ENCODE measurements at regions of chr3 and their contacts with region 1.

Region 1: DNA sequence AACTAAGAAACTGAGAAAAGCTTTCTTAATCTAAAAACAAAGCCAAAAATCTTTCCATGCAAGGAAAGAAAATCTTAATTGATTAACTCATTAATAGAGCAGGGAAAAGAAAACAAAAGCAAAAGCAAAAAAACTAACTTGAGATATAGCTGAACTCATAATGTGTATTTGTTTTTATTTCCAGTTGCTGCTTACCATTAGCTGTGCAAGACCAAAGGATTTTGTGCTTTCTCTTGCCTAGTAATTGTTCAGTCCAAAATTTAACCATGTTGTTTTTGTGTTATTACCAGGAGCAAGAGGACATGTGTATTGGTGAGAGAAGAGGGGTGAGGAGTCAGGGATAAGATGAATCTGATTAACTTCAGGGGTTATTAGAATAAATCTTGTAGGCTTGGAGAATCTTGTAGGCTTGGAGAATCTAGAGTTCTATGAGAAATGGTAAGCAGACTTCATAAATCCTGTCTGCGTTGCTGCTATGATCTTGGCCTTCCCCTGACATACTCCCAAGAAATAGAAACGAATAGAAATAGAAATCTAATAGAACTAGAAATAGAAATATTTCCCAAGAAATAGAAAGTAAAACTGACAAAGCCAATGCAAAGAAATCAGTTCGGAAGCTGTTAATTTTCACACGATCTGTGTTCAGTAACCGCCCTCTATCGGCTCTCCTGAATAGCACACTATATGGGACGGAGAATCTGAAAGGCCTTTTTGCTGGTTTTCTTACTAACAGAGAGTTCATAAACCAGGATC is 72.6 kb upstream of the TNFSF10 start:
- DNase-seq: peak; percentile 51
- H3K4me3 Mint-ChIP-seq: peak overlapping the region; percentile 69
- H3K27ac Mint-ChIP-seq: peak overlapping the region; percentile 51
- H3K4me1 Mint-ChIP-seq: peaks cover 56% of the 10 kb centered on the region
- H3K27me3 Mint-ChIP-seq: peaks cover 4% of the 10 kb centered on the region

Region 2: DNA sequence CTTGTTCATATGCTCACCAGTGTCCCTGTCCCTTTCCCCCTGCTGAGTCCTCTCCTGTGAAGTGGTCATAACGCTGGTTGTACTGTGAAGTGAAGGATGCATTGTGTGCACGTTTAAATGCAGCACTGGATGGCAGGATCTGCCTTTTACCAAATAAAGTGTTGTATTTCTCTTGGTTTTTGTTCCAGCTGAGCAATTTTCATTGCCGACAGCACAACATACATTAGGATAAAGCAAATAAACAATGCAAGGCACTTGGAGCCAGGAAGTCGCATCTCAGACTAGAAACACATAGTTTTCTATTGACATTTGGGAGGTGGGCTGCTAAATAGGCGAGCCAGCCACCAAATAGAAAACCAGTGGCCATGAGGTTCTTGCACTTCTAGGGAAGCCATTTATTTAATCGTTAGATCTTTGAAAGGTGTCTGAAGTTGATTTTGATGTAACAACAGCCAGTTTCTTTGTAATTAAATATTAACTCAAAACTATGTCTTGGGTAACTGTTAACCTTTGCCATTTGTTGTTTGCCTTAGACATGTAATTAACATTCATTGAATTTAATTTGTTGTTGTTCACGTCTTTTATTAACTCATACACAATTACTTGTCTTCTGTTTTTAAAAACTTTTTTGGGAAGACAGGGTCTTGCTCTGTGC is 371.1 kb before region 1 on chr3:
- CTCF ChIA-PET with region 1: no interaction called
- DNase-seq: no peak
- H3K4me3 Mint-ChIP-seq: no peak overlapping the region
- H3K27ac Mint-ChIP-seq: no peak overlapping the region
- H3K4me1 Mint-ChIP-seq: no peaks in the 10 kb centered on the region
- H3K27me3 Mint-ChIP-seq: no peaks in the 10 kb centered on the region

Region 3: DNA sequence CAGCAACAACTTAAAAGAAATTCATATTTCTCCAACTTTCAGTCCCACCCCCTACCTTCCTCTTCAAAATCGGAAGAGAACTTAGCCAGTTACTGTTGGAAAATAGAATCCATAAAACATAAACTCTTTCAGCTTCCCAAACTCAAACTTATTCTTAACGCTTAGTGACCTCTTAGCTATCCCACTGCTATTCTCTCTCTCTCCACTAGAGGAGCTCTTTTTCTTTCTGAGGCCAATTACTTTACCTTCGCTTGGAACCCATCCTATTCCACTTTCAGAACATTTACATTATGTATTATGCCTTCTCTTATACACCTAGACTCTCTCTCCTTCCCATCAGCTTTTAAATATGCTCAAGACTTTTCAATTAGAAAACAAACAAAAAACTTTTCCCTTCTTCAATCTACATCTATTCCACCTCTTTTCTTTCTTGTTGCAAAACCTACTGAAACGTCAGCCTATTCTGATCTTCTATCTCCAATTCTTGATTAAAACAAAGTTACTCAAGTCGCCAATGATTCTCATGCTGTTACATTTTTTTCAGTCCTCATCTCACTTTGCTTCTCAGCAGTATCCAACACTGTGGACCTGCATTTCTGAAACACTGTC is 134.2 kb before region 1 on chr3:
- CTCF ChIA-PET with region 1: interaction called, 20 read pairs
- DNase-seq: no peak
- H3K4me3 Mint-ChIP-seq: no peak overlapping the region
- H3K27ac Mint-ChIP-seq: no peak overlapping the region
- H3K4me1 Mint-ChIP-seq: no peaks in the 10 kb centered on the region
- H3K27me3 Mint-ChIP-seq: peaks cover 5% of the 10 kb centered on the region

Region 4: GRCh38 chr3:172522871-172523818 is 72.7 kb before region 1 on chr3 and contains the start of gene TNFSF10:
- CTCF ChIA-PET with region 1: interaction called, 180 read pairs
- DNase-seq: peak; percentile 86
- H3K4me3 Mint-ChIP-seq: peak within 1 kb of the TSS; percentile 100
- H3K27ac Mint-ChIP-seq: peak within 1 kb of the TSS; percentile 99
- H3K4me1 Mint-ChIP-seq: peaks cover 48% of the 10 kb centered on the region
- H3K27me3 Mint-ChIP-seq: no peaks in the 10 kb centered on the region

Region 5: DNA sequence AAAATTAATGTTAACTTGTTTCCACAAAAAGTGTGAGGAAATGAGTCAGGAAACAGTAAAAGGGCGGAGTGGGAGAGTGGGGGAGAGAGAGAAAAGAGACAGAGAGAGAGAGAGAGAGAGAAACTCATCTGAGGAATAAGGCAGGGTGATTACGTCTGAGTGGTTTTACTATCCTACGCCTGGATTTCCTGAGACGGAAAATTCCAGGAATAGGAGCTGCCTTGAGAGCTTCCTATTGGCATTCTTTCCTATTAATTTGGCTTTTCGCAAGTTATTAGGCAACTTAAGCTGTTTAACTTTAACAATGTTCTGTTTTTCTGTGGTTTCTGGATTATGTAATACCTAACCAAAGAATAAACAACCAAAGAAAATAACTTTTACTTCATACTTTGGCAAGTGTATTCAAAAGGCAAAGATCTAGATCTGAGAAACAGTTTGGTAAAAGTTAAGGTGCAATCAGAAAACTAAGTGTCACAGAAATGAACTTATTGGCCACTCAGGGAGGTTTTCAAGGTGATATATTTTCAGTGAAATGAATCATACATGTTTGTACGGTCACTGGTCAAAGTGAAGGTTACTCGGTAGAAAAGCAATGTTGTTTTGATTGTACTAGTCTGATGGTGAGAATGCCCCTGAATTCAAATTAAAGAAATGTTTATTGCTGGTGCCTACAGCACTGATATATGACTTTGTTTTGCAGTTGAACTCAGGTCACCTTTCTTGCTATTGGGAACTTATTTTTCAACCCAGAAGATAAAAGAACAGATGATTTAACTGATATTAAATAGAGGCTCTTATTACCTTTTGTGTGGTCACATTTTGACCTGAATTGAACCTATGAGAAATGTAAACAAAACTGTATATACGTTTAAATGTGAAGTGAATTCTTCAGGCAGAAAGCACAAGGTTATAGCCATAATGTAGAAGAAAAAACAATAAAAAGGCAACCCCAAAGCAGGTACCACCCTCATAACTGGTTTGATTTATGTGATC is 32.6 kb before region 1 on chr3:
- CTCF ChIA-PET with region 1: interaction called, 10 read pairs
- DNase-seq: peak; percentile 29
- H3K4me3 Mint-ChIP-seq: peak overlapping the region; percentile 47
- H3K27ac Mint-ChIP-seq: peak overlapping the region; percentile 77
- H3K4me1 Mint-ChIP-seq: peaks cover 25% of the 10 kb centered on the region
- H3K27me3 Mint-ChIP-seq: no peaks in the 10 kb centered on the region

Region 6: GRCh38 chr3:172607305-172608121 is 11.7 kb after region 1 on chr3:
- CTCF ChIA-PET with region 1: interaction called, 11 read pairs
- DNase-seq: no peak
- H3K4me3 Mint-ChIP-seq: no peak overlapping the region
- H3K27ac Mint-ChIP-seq: no peak overlapping the region
- H3K4me1 Mint-ChIP-seq: no peaks in the 10 kb centered on the region
- H3K27me3 Mint-ChIP-seq: peaks cover 4% of the 10 kb centered on the region

Region 7: DNA sequence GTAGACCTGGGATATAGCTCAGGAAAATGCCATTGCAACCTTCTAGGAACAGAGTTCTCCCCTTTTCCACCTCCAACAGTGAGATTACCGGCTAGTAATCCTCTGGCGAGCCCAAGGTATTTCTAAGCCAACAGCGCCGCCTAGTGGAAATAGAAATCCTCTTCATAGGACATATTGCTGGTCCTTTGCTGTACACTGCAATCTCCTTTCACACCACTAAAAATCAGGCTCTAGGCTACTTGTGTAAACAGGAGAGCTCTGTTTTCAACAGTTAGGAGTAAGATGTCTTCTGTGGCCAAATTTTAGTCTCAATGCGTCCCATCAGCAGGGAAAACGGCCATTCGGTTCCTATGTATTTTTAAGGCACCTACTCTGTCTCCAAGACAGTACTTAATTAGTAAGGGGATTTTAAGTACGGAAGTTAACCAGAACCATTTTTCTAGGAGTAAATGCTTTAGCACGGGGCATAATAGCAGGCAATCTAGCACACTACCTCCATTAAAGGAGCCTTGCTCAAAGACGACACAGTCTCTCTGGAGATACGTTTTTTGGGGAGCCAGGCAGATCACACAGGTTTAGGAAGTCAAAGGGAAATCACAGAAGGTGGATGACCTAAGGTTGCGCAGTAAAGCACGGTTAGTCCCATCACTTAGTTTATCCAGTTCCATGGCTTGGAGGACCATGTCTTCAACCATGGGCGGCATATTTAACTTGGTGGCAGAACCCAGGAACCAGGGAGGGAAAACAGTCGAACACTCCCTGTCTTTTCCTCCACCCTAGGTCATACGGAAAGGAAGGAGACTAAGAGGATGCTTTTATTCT is 71.3 kb after region 1 on chr3:
- CTCF ChIA-PET with region 1: interaction called, 27 read pairs
- DNase-seq: peak; percentile 87
- H3K4me3 Mint-ChIP-seq: no peak overlapping the region
- H3K27ac Mint-ChIP-seq: no peak overlapping the region
- H3K4me1 Mint-ChIP-seq: peaks cover 23% of the 10 kb centered on the region
- H3K27me3 Mint-ChIP-seq: peaks cover 11% of the 10 kb centered on the region